ENCODE measurements at regions of chr9 and their contacts with region 1.

Region 1: GRCh38 chr9:131046581-131047202 is 37.7 kb downstream of the LAMC3 start:
- DNase-seq: no peak
- H3K4me3 ChIP-seq: no peak overlapping the region
- H3K27me3 ChIP-seq: no peaks in the 10 kb centered on the region; the same call in 1 of the 2 replicates
- CTCF ChIP-seq: peak; percentile 99

Region 2: GRCh38 chr9:130444565-130445221 is 602.0 kb before region 1 on chr9 and contains the start of gene ASS1:
- CTCF ChIA-PET with region 1: no interaction called
- POLR2A ChIA-PET with region 1: no interaction called
- DNase-seq: no peak
- H3K4me3 ChIP-seq: peak within 1 kb of the TSS; percentile 82
- H3K27me3 ChIP-seq: no peaks in the 10 kb centered on the region; the same call in 1 of the 2 replicates
- CTCF ChIP-seq: no peak
- polyA plus RNA-seq, gene ASS1: 1,063 and 1,223 TPM in 2 replicates

Region 3: GRCh38 chr9:130701056-130702022 is 345.4 kb before region 1 on chr9:
- CTCF ChIA-PET with region 1: interaction called, 52 read pairs
- POLR2A ChIA-PET with region 1: no interaction called
- DNase-seq: no peak
- H3K4me3 ChIP-seq: no peak overlapping the region
- H3K27me3 ChIP-seq: no peaks in the 10 kb centered on the region
- CTCF ChIP-seq: peak; percentile 99

Region 4: DNA sequence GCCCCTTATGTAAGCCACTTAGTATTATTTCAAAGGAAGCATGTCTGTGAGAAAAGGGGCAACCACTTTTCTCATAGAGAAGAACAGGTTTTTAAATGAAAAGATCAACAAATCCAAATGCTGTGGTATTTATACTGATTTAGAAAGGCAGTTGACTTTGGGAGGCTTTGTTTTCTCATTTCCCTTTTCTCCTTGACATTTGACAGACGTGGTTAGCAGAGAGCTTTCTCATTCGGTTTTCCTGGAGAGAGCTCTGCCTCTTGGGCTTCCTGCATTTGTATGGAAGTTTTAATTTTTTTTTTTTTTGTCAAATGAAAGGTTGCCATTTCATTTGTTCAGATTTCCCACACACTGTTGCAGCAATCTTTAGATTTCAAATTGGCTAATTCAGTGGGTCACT is 290.7 kb before region 1 on chr9:
- CTCF ChIA-PET with region 1: no interaction called
- POLR2A ChIA-PET with region 1: no interaction called
- DNase-seq: no peak
- H3K4me3 ChIP-seq: no peak overlapping the region
- H3K27me3 ChIP-seq: no peaks in the 10 kb centered on the region
- CTCF ChIP-seq: no peak

Region 5: GRCh38 chr9:130936298-130937117 is 110.2 kb before region 1 on chr9:
- CTCF ChIA-PET with region 1: interaction called, 10 read pairs
- POLR2A ChIA-PET with region 1: no interaction called
- DNase-seq: peak; percentile 32
- H3K4me3 ChIP-seq: no peak overlapping the region
- H3K27me3 ChIP-seq: peaks cover 3% of the 10 kb centered on the region
- CTCF ChIP-seq: no peak

Region 6: DNA sequence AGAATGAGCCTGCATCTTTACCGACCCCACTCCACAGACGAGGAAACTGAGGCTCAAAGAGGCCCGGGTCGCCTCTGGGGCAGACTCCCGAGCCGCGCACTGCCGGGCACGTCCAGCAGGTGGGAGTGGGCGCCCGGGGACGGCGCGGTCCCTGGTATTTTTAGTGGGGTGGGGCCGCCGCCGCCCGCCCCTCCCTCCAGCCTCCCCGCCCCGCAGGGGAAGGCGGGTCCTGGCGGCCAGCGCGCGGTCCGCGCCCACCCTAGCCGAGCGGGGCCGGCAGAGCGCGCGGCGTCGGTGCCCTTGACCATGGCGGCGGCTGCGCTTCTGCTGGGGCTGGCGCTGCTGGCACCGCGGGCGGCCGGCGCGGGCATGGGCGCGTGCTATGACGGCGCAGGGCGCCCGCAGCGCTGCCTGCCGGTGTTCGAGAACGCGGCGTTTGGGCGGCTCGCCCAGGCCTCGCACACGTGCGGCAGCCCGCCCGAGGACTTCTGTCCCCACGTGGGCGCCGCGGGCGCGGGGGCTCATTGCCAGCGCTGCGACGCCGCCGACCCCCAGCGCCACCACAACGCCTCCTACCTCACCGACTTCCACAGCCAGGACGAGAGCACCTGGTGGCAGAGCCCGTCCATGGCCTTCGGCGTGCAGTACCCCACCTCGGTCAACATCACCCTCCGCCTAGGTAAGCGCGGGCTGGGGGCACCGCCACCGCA is 37.6 kb before region 1 on chr9 and contains the start of gene LAMC3:
- CTCF ChIA-PET with region 1: interaction called, 34 read pairs
- POLR2A ChIA-PET with region 1: no interaction called
- DNase-seq: no peak
- H3K4me3 ChIP-seq: no peak within 1 kb of the TSS; the same call in 1 of the 2 replicates
- H3K27me3 ChIP-seq: peaks cover 33% of the 10 kb centered on the region
- CTCF ChIP-seq: peak; percentile 44
- polyA plus RNA-seq, gene LAMC3: 0.01 TPM in 1 of 2 replicates, not detected in the other

Region 7: GRCh38 chr9:131018621-131019020 is 28.1 kb before region 1 on chr9:
- CTCF ChIA-PET with region 1: interaction called, 12 read pairs
- POLR2A ChIA-PET with region 1: no interaction called
- DNase-seq: no peak
- H3K4me3 ChIP-seq: no peak overlapping the region
- H3K27me3 ChIP-seq: peaks cover 22% of the 10 kb centered on the region
- CTCF ChIP-seq: no peak

Region 8: GRCh38 chr9:131031005-131031641 is 15.6 kb before region 1 on chr9:
- CTCF ChIA-PET with region 1: interaction called, 48 read pairs
- POLR2A ChIA-PET with region 1: no interaction called
- DNase-seq: no peak
- H3K4me3 ChIP-seq: no peak overlapping the region
- H3K27me3 ChIP-seq: peaks cover 10% of the 10 kb centered on the region
- CTCF ChIP-seq: no peak